Activated naive CD4-positive, alpha-beta T cell treated with anti-CD3 and anti-CD28 coated beads for 36 hours (primary cell): ENCODE measurements at regions of chr3 and their contacts with region 1.

Region 1: GRCh38 chr3:81760924-81761903 is at the start of gene GBE1:
- DNase-seq: peak; percentile 87
- H3K4me3 Mint-ChIP-seq: peak within 1 kb of the TSS; percentile 90
- H3K27ac Mint-ChIP-seq: peak within 1 kb of the TSS; percentile 97
- H3K4me1 Mint-ChIP-seq: peaks cover 14% of the 10 kb centered on the region
- H3K27me3 Mint-ChIP-seq: no peaks in the 10 kb centered on the region
- total RNA-seq, gene GBE1: 24.6 to 26.0 TPM

Region 2: GRCh38 chr3:80993241-80993945 is 767.8 kb before region 1 on chr3:
- CTCF ChIA-PET with region 1: no interaction called
- intact Hi-C with region 1: no loop called
- DNase-seq: no peak
- H3K4me3 Mint-ChIP-seq: no peak overlapping the region
- H3K27ac Mint-ChIP-seq: no peak overlapping the region
- H3K4me1 Mint-ChIP-seq: no peaks in the 10 kb centered on the region
- H3K27me3 Mint-ChIP-seq: no peaks in the 10 kb centered on the region

Region 3: GRCh38 chr3:81581966-81582599 is 179.1 kb before region 1 on chr3:
- CTCF ChIA-PET with region 1: no interaction called
- intact Hi-C with region 1: loop called (anchors 5 kb)
- DNase-seq: peak; percentile 46
- H3K4me3 Mint-ChIP-seq: no peak overlapping the region
- H3K27ac Mint-ChIP-seq: no peak overlapping the region
- H3K4me1 Mint-ChIP-seq: no peaks in the 10 kb centered on the region
- H3K27me3 Mint-ChIP-seq: no peaks in the 10 kb centered on the region